ENCODE measurements at regions of chr6 and their contacts with region 1.

Region 1: GRCh38 chr6:27177485-27178406 is 69.8 kb upstream of the PRSS16 start:
- DNase-seq: peak; percentile 76 to 85
- ATAC-seq: peak; percentile 86 to 91 (median 89)
- H3K4me3 ChIP-seq: peak overlapping the region; percentile 88
- H3K27ac ChIP-seq: peak overlapping the region; percentile 62
- H3K4me1 ChIP-seq: no peaks in the 10 kb centered on the region
- H3K27me3 ChIP-seq: peaks cover 4 to 7% (median 4%) of the 10 kb centered on the region in 3 donors
- CTCF ChIP-seq: peak; percentile 34

Region 2: DNA sequence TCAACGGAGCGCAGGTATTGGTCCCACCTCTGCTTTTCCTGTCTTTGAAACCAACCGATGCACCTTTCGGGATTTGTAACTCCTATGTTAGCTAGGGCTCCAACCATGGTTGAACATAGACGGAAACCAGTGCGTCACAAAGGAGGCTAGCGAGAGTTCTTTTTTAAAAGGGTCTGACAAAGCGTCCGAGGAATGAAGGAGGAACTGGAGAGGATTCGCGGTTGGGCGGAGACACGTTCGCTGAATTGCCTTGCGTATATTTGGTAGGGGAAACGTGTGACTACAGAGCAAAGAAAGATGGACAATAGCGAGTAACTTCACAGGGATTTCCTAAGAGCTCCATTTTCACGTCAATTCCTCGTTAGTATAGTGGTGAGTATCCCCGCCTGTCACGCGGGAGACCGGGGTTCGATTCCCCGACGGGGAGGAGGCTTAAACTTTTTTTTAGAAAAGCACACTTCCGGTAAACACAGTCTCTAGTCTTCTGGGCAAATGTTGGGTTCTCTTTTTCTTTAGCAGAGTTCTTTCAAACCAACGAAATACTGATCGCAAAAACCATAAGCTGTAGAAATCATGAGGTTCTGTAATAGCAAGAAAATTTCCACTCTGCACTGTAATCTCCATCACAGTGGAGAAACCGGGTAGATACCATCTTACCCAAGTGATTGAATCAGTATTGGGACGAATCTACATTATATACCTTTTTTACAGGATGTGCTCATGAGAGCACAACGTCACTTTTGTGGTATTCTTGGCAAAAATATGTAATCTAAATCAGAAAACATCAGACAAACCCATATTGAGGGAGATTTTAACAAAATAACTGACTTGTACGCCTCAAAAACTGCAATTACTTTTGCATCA is 301.8 kb after region 1 on chr6:
- intact Hi-C with region 1: loop called (anchors 5 to 10 kb)
- DNase-seq: peak; percentile 73 to 82
- ATAC-seq: peak; percentile 85 to 90 (median 88)
- H3K4me3 ChIP-seq: peak overlapping the region; percentile 73
- H3K27ac ChIP-seq: peak overlapping the region; percentile 82
- H3K4me1 ChIP-seq: peaks cover 3% of the 10 kb centered on the region
- H3K27me3 ChIP-seq: no peaks in the 10 kb centered on the region
- CTCF ChIP-seq: no peak

Region 3: DNA sequence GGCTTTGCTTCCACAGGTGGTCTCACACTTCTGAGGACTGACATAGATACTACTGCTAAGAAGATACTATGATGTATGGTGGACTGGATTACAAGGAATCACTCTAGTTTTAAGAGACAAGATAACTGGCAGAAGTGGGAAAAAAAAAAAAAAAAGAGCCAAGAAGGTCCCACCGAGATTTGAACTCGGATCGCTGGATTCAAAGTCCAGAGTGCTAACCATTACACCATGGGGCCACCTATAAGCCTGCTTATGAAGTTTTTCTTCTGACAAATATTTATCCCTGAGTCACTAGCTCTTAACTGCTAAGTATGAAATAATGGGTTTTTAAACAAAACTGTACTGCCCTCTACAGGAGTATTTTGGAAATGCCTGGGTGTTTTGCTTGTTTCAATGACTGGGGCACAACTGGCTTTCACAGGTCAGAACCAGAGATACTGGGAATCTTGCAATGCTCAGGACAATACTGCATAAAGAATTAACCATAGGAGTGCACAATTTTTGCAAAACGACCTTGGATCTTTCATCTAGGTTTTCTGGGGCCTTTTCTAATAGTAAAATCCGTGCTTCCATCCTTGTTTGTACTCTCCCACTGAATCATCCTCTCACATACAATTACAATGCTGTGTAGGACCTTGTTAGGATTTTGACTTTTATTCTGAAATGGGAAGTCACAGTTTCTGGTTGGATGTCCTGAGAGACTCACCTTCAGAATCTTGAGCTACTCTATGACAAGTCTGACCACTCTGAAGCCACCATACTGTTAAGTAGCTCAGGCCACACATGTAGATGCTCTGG is 618.1 kb after region 1 on chr6:
- intact Hi-C with region 1: loop called in 1 of 2 experiments (anchors 5 kb)
- DNase-seq: no peak
- ATAC-seq: peak; percentile 73 to 81 (median 78)
- H3K4me3 ChIP-seq: no peak overlapping the region
- H3K27ac ChIP-seq: no peak overlapping the region
- H3K4me1 ChIP-seq: no peaks in the 10 kb centered on the region
- H3K27me3 ChIP-seq: peaks cover 0 to 6% (median 0%) of the 10 kb centered on the region in 3 donors
- CTCF ChIP-seq: peak; percentile 74